MCF 10A (cell line): ENCODE measurements at regions of chr9 and their contacts with region 1.

Region 1: DNA sequence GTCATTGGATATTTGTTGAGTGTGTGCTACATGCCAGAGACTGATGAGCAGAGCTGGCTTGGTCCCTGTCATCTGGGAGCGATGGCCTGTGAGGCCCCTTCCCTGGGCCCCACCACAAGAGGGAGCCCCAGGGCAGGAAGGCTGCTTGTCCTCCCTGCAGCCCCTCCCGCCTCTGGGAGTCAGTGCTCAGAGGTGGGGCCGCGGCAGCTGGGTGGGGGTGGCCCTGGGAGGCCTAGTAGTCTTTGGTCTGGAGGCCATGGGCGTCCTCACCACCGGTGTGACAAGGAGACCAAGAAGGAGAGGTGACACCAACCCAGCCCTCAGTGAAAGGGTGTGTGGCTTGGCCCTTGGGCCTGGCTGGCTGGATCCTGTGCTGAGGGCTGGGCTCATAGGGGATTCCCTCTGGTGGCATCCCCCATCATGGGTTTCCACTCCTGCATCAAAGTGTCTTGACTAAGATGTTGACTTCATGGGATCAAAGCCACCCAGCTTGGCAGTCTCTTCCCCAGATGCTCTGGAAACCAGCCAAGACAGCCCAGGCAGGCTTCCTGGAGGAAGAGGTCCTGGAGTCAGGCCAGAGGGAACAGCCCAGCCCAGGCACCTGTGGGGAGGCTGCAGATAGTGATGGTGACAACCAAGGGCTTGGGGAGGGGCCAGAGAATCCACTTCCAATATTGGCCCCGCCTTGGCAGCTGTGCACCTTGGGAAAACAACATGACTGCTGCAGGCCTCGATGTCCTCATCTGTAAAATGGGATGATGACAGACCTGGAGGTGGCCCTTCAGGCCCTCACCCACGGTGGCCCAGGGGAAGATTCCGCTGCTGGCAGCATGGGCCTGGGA is 166.7 kb downstream of the GAPVD1 start:
- DNase-seq: peak; percentile 38
- H3K4me3 Mint-ChIP-seq: no peak overlapping the region
- H3K27ac Mint-ChIP-seq: no peak overlapping the region
- H3K4me1 Mint-ChIP-seq: no peaks in the 10 kb centered on the region
- H3K27me3 Mint-ChIP-seq: no peaks in the 10 kb centered on the region
- CTCF ChIP-seq: peak; percentile 42

Region 2: DNA sequence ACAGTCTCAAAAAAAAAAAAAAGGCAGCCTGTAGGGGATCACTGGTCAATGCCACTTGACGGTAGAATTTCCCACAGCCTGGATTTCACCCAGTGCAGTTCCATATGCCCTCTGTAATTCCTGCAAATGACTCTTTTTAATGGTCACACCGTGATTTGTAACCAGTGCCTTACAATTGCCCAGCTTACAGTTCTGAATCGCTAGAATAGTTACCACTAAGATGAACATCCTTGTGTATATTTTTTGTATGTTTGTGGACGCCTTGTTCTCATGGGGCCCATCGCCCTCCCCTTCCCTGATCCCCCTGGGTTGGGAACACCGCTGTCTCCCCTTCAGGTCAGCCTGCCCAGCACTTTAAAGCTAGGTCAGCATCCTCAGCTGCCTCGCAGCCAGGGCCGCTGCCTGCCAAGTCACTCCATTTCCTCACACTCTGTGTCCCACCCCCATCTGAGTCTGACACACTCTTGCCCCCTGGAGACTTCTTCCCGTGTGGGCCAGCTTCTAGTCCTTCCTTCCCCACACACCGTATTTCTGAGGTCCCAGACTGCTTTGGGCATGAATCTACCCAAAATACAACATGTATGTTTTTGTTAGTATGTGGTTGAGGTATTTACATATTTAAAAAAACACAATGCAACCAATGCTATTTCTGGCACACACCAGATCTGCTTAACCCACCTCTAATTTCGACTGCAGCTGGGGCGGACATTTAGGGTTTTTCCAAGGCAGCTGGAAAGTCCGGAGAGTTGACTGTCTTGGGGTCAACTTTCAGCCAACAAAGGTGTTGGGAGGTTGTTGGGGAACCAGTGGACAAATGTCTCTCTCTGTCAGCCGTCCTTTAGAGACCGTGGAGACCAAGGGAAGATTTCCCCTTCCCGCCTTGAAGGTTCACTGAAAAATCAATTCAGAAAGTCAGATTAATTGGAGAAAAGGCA is 1291.0 kb before region 1 on chr9:
- CTCF ChIA-PET with region 1: no interaction called
- POLR2A ChIA-PET with region 1: no interaction called
- intact Hi-C with region 1: no loop called
- DNase-seq: no peak
- H3K4me3 Mint-ChIP-seq: no peak overlapping the region
- H3K27ac Mint-ChIP-seq: no peak overlapping the region
- H3K4me1 Mint-ChIP-seq: no peaks in the 10 kb centered on the region
- H3K27me3 Mint-ChIP-seq: peaks cover 14% of the 10 kb centered on the region
- CTCF ChIP-seq: no peak

Region 3: DNA sequence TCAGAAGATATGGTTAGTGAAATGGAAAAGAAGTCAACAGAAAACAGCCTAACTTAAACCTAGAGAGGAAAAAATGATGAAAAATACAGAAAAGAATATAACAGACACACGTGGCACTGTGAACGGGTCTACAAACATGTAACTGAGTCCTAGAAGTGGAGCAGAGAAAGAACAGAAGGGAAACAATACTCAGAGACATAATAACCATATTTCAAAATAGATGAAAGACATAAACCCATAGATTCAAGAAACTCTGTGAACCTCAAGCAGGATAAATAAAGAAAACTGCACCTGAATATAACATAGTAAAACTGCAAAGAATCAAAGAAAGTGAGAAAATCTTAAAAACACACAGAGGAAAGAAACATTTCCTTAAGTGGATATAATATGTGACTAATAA is 419.7 kb before region 1 on chr9:
- CTCF ChIA-PET with region 1: no interaction called
- POLR2A ChIA-PET with region 1: no interaction called
- intact Hi-C with region 1: no loop called
- DNase-seq: no peak
- H3K4me3 Mint-ChIP-seq: no peak overlapping the region
- H3K27ac Mint-ChIP-seq: no peak overlapping the region
- H3K4me1 Mint-ChIP-seq: no peaks in the 10 kb centered on the region
- H3K27me3 Mint-ChIP-seq: no peaks in the 10 kb centered on the region
- CTCF ChIP-seq: no peak

Region 4: GRCh38 chr9:125544988-125545651 is 116.8 kb after region 1 on chr9:
- CTCF ChIA-PET with region 1: no interaction called
- POLR2A ChIA-PET with region 1: no interaction called
- intact Hi-C with region 1: loop called (anchors 10 kb)
- DNase-seq: peak; percentile 11
- H3K4me3 Mint-ChIP-seq: no peak overlapping the region
- H3K27ac Mint-ChIP-seq: no peak overlapping the region
- H3K4me1 Mint-ChIP-seq: peaks cover 33% of the 10 kb centered on the region
- H3K27me3 Mint-ChIP-seq: no peaks in the 10 kb centered on the region
- CTCF ChIP-seq: no peak

Region 5: DNA sequence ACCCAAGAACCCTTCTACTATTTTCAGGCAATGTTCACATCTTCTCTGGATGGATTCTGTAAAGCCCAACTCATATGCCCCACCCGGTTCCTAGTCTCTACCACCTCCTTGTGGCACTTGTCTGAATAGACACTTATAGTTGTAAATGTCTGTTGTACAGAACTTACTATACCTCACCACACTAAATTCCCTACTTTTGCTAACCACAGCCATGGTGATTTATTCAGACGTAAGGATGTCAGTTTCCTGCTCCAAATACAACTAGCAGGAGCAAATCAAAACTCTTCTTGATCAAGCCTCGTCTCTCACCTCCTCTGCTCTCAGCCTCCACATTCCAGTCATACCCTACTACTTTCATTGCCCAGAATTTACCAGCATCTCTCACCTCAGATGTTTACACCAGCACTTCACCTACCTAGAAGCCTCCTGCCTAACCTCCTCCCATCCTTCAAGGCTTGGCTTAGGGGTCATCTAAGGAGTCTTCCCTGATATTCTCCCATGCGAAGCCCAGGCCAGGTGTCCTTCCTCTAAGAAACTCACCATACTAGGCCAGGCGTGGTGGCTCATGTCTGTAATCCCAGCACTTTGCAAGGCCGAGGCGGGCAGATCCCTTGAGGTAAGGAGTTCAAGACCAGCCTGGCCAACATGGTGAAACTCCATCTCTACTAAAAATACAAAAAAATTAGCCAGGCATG is 203.3 kb after region 1 on chr9:
- CTCF ChIA-PET with region 1: no interaction called
- POLR2A ChIA-PET with region 1: no interaction called
- intact Hi-C with region 1: loop called (anchors 5 kb)
- DNase-seq: peak; percentile 56
- H3K4me3 Mint-ChIP-seq: no peak overlapping the region
- H3K27ac Mint-ChIP-seq: no peak overlapping the region
- H3K4me1 Mint-ChIP-seq: peaks cover 43% of the 10 kb centered on the region
- H3K27me3 Mint-ChIP-seq: no peaks in the 10 kb centered on the region
- CTCF ChIP-seq: peak; percentile 38